GM12878 (cell line): ENCODE measurements at regions of chr15 and their contacts with region 1.

Region 1: GRCh38 chr15:63752075-63752684 is 81.6 kb downstream of the HERC1 start:
- DNase-seq: peak; percentile 23
- ATAC-seq: peak; percentile 89
- H3K4me3 ChIP-seq: no peak overlapping the region
- H3K27ac ChIP-seq: no peak overlapping the region
- H3K4me1 ChIP-seq: no peaks in the 10 kb centered on the region
- H3K27me3 ChIP-seq: no peaks in the 10 kb centered on the region
- CTCF ChIP-seq: peak; percentile 55 to 82 (median 70); a peak in 5 of 6 replicates
- EP300 ChIP-seq: no peak
- POLR2A ChIP-seq: no peak
- RAD21 ChIP-seq: peak; percentile 90

Region 2: DNA sequence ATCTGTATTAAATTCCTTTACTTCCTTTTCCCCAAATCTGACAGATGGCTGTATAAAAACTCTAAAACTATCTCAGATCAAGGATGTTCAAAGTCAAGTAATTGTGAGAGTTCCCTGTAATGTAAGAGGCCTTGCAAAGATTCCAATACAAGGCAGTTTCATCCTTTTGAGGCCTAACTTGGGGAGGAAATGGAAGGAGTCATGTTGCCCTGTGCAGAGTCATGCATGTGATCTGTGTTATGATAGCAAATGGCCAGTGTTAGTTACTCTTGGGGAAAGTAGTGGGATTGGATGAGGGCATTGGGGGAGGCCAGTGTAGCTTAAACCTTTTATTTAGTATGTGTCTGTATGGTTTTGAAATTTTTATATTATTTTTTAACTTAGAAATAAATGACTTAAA is 178.6 kb before region 1 on chr15:
- CTCF ChIA-PET with region 1: no interaction called
- POLR2A ChIA-PET with region 1: no interaction called
- RAD21 ChIA-PET with region 1: no interaction called
- SMC1A ChIA-PET with region 1: no interaction called
- in situ Hi-C with region 1: no loop called
- intact Hi-C with region 1: no loop called
- DNase-seq: no peak
- ATAC-seq: no peak
- H3K4me3 ChIP-seq: no peak overlapping the region
- H3K27ac ChIP-seq: no peak overlapping the region
- H3K4me1 ChIP-seq: no peaks in the 10 kb centered on the region
- H3K27me3 ChIP-seq: no peaks in the 10 kb centered on the region
- CTCF ChIP-seq: no peak
- EP300 ChIP-seq: no peak
- POLR2A ChIP-seq: no peak
- RAD21 ChIP-seq: no peak

Region 3: DNA sequence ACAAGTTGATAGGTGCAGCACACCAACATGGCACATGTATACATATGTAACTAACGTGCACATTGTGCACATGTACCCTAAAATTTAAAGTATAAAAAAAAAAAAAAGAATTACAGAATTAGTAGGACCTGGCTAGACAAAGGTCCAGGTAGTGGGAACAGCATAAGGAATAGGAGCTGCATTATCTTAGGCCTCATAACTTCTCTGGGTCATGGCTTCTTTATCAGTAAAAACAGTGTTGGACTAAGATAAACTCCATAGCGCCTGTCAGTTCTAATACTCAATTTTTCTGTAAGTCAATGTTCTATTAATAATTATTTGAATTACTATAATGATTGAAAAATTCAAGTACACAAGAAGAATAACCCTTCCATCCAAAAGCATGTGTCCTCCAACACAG is 16.7 kb before region 1 on chr15:
- CTCF ChIA-PET with region 1: interaction called, 21 read pairs
- POLR2A ChIA-PET with region 1: no interaction called
- RAD21 ChIA-PET with region 1: interaction called, 4 read pairs
- SMC1A ChIA-PET with region 1: interaction called, 5 read pairs
- in situ Hi-C with region 1: no loop called
- intact Hi-C with region 1: no loop called
- DNase-seq: no peak
- ATAC-seq: no peak
- H3K4me3 ChIP-seq: no peak overlapping the region
- H3K27ac ChIP-seq: no peak overlapping the region
- H3K4me1 ChIP-seq: no peaks in the 10 kb centered on the region
- H3K27me3 ChIP-seq: no peaks in the 10 kb centered on the region
- CTCF ChIP-seq: no peak
- EP300 ChIP-seq: no peak
- POLR2A ChIP-seq: no peak
- RAD21 ChIP-seq: no peak

Region 4: DNA sequence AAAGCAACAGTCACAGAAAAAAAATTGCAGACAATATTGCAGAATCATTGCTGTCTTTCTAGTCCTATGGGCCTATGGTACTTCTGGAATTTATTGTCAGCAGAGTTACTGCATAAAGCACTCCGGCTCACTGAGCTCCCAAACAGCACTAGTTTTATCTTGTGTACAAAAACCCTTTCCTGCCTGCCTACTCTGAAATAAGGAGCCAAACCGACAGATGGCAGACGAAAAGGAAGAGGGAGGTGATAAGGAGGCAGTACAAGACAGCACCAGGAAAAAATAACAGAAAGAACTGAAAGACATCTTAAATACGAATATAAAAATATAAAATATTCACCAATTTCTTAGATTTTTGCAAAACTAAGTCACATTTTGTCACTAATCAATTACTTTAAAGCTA is 66.0 kb after region 1 on chr15:
- CTCF ChIA-PET with region 1: interaction called, 15 read pairs
- POLR2A ChIA-PET with region 1: interaction called, 3 read pairs
- RAD21 ChIA-PET with region 1: interaction called, 9 read pairs
- SMC1A ChIA-PET with region 1: interaction called, 8 read pairs
- in situ Hi-C with region 1: no loop called
- intact Hi-C with region 1: no loop called
- DNase-seq: no peak
- ATAC-seq: no peak
- H3K4me3 ChIP-seq: no peak overlapping the region
- H3K27ac ChIP-seq: no peak overlapping the region
- H3K4me1 ChIP-seq: no peaks in the 10 kb centered on the region; the same call in 1 of the 2 replicates
- H3K27me3 ChIP-seq: no peaks in the 10 kb centered on the region
- CTCF ChIP-seq: no peak
- EP300 ChIP-seq: no peak
- POLR2A ChIP-seq: no peak
- RAD21 ChIP-seq: no peak

Region 5: GRCh38 chr15:63881431-63881830 is 129.3 kb after region 1 on chr15:
- CTCF ChIA-PET with region 1: interaction called, 37 read pairs
- POLR2A ChIA-PET with region 1: interaction called, 5 read pairs
- RAD21 ChIA-PET with region 1: interaction called, 23 read pairs
- SMC1A ChIA-PET with region 1: interaction called, 18 read pairs
- in situ Hi-C with region 1: no loop called
- intact Hi-C with region 1: no loop called
- DNase-seq: peak; percentile 81
- ATAC-seq: peak; percentile 69
- H3K4me3 ChIP-seq: no peak overlapping the region
- H3K27ac ChIP-seq: peak overlapping the region; percentile 66
- H3K4me1 ChIP-seq: peaks cover 53% of the 10 kb centered on the region
- H3K27me3 ChIP-seq: no peaks in the 10 kb centered on the region
- CTCF ChIP-seq: 0 out of 6 replicates have a peak, but pooled peaks of 1 of the 3 experiments have one; percentile 7
- EP300 ChIP-seq: peak; percentile 16 to 51; a peak in 1 of 4 replicates
- POLR2A ChIP-seq: no peak
- RAD21 ChIP-seq: no peak

Region 6: DNA sequence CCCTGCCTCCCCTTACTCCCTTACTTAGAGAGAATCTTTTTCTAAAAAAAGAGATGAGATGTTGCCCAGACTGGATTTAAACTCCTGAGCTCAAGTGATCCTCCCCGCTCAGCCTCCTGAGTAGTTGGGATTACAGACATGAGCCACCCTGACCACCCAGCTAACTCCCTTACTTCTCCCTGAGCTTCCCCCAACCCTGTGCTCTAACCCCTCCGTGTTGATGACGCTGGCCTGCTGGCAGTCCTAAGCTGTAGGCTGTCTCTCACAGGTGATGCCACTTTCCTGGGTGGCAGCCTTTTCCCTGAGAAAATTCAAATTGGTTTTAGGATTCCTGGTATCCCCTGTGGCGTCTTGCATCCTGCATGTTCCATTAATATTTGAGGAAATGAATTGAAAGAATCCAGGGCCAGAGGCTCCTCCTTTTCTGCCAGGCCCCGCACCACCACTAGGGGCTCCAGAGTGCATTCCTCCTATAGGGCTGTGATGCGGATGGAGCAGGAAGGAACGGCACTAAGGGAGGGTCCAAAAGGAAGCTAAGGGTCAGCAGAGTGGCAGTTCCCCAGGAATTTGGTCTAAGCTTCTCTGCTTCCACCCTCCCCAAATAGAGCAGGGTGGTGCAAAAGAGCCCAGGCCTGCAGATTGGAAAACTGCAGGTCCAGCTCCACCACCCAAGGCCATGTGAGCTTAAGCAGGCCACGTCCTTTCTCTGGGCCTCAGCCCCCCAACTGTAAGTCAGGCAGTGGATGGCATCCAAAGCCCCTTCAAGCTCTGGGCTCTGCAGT is 193.0 kb after region 1 on chr15:
- CTCF ChIA-PET with region 1: interaction called, 23 read pairs
- POLR2A ChIA-PET with region 1: no interaction called
- RAD21 ChIA-PET with region 1: interaction called, 15 read pairs
- SMC1A ChIA-PET with region 1: interaction called, 9 read pairs
- in situ Hi-C with region 1: no loop called
- intact Hi-C with region 1: no loop called
- DNase-seq: no peak
- ATAC-seq: peak; percentile 89
- H3K4me3 ChIP-seq: no peak overlapping the region
- H3K27ac ChIP-seq: no peak overlapping the region
- H3K4me1 ChIP-seq: peaks cover 13% of the 10 kb centered on the region
- H3K27me3 ChIP-seq: no peaks in the 10 kb centered on the region
- CTCF ChIP-seq: peak; percentile 83 to 99 (median 98)
- EP300 ChIP-seq: no peak
- POLR2A ChIP-seq: no peak
- RAD21 ChIP-seq: peak; percentile 78

Region 7: DNA sequence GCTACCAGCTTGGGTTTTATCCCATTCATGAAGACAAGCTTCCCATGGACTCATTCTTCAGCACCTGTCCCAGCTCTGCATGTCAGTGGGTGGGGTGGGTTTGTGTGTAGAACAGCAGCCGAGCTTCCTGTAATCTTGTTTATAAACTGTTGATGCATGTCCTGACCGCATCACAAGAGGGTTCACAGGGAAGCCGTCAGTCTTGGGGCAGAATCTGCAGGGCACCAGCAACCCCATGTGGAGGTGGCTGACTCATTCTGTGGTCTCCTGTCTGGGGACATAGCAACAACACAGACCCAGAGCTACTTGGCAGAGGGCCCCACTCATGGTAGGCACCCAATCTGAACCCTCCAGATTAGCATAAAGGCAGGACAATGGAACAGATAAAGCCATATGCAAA is 258.5 kb after region 1 on chr15:
- CTCF ChIA-PET with region 1: interaction called, 102 read pairs
- POLR2A ChIA-PET with region 1: interaction called, 5 read pairs
- RAD21 ChIA-PET with region 1: interaction called, 68 read pairs
- SMC1A ChIA-PET with region 1: interaction called, 80 read pairs
- in situ Hi-C with region 1: no loop called
- intact Hi-C with region 1: loop called (anchors 1 kb)
- DNase-seq: peak; percentile 96
- ATAC-seq: peak; percentile 98
- H3K4me3 ChIP-seq: no peak overlapping the region
- H3K27ac ChIP-seq: peak overlapping the region; percentile 76
- H3K4me1 ChIP-seq: peaks cover 32% of the 10 kb centered on the region
- H3K27me3 ChIP-seq: no peaks in the 10 kb centered on the region
- CTCF ChIP-seq: peak; percentile 36 to 71 (median 54)
- EP300 ChIP-seq: peak; percentile 61 to 78; a peak in 2 of 4 replicates
- POLR2A ChIP-seq: no peak
- RAD21 ChIP-seq: peak; percentile 77

Region 8: DNA sequence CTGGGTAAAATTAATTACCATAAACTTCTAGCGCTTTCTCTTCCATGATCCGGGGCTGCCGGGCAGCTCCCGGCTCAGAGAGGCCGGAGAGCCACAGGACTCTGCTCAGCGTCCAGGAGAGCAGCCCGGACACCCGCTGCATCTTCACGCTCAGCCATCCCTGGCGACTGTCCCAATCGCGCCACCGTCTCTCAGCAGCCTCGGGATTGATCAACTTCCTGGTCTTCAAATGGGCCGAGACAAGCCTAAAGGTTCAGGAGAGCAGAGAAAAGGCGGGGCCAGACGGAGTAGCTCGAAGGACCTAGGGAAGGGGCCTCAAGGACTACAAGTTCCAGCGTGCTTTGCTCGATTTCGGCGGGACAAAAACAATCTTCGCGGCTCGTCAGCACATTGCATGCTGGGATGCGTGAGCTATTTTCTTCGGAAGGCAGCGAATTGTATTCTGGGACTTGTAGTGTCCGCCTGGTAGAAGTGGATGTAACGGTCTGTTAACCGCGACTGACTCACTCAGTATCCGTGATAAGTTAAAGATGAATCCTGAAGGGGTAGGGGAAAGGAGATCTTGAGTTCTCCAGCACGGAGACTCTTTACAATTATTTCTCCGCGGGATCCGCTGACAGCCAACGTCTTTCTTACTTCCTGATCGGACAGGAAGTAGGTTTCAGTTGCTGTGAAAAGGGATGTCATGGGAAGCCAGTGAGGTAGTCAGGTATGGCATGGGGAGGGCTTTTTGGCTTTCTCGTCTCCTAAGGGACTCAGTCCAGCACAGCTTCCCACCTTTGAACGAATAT is 341.6 kb after region 1 on chr15 and contains the start of gene CIAO2A:
- CTCF ChIA-PET with region 1: interaction called, 9 read pairs
- POLR2A ChIA-PET with region 1: no interaction called
- RAD21 ChIA-PET with region 1: interaction called, 11 read pairs
- SMC1A ChIA-PET with region 1: interaction called, 17 read pairs
- in situ Hi-C with region 1: no loop called
- intact Hi-C with region 1: no loop called
- DNase-seq: peak; percentile 99
- ATAC-seq: peak; percentile 74
- H3K4me3 ChIP-seq: peak within 1 kb of the TSS; percentile 96
- H3K27ac ChIP-seq: peak within 1 kb of the TSS; percentile 94
- H3K4me1 ChIP-seq: peaks cover 32% of the 10 kb centered on the region
- H3K27me3 ChIP-seq: no peaks in the 10 kb centered on the region
- CTCF ChIP-seq: no peak
- EP300 ChIP-seq: no peak
- POLR2A ChIP-seq: peak; percentile 66; the same call in 1 of the 2 replicates
- RAD21 ChIP-seq: no peak
- polyA plus RNA-seq, gene CIAO2A: 264 to 303 TPM